PC-9 (cell line): ENCODE measurements at regions of chr11 and their contacts with region 1.

Region 1: GRCh38 chr11:32006799-32007388 is 84.0 kb upstream of the RCN1 start:
- DNase-seq: peak; percentile 25 to 45
- H3K4me3 ChIP-seq: no peak overlapping the region
- H3K27ac ChIP-seq: no peak overlapping the region
- H3K4me1 ChIP-seq: no peaks in the 10 kb centered on the region
- H3K27me3 ChIP-seq: peaks cover 30% of the 10 kb centered on the region
- CTCF ChIP-seq: peak; percentile 82

Region 2: DNA sequence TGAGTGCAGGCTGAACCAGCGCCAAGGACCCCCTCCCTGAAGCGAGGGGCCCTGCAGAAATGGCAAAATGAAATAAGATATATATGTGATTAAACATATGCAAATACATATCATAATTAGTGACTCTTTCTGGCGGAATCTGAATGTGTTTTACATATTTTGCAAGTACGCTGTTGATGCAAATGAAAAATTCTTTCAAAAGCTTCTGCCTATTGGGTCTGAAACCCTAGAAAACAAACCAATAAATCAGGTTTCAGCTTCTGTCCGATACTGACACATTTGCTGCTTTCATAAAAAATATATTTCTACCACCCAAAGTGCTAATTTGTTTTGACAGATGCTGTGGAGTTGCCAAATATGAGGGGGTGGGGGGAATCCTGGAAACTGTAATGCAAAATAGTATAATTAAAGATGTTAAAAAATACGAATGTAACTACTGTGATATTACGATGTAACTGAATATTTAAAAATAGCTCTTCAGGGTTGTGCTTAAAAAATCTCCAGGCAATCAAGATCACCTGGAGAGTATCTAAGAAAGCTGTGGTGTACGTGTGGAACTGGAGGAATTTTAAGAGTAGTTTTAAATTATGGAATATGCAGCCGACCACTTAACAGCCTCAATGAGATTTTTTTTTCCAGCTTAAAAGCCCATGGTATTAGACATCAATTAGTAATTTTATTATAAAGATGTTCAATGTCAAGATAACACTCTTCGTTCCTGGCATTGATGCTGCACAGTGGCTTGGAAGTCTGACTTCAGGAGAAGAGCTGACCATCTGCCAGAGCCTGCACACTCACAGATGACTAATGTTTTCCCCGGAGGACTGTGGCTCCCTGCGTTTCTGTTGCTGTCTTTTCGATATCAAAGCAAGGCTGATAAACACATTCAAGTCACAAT is 38.2 kb before region 1 on chr11:
- CTCF ChIA-PET with region 1: no interaction called
- POLR2A ChIA-PET with region 1: no interaction called
- intact Hi-C with region 1: no loop called
- DNase-seq: no peak
- H3K4me3 ChIP-seq: no peak overlapping the region
- H3K27ac ChIP-seq: no peak overlapping the region
- H3K4me1 ChIP-seq: no peaks in the 10 kb centered on the region
- H3K27me3 ChIP-seq: no peaks in the 10 kb centered on the region
- CTCF ChIP-seq: no peak

Region 3: GRCh38 chr11:32034149-32034548 is 27.3 kb after region 1 on chr11:
- CTCF ChIA-PET with region 1: interaction called, 24 read pairs
- POLR2A ChIA-PET with region 1: no interaction called
- intact Hi-C with region 1: no loop called
- DNase-seq: no peak
- H3K4me3 ChIP-seq: no peak overlapping the region
- H3K27ac ChIP-seq: no peak overlapping the region
- H3K4me1 ChIP-seq: no peaks in the 10 kb centered on the region
- H3K27me3 ChIP-seq: peaks cover 18% of the 10 kb centered on the region; the same call in 1 of the 2 replicates
- CTCF ChIP-seq: no peak